Activated CD4-positive, alpha-beta T cell treated with anti-CD3 and anti-CD28 coated beads, Interleukin-2, amount 10 ng/mL, durations not matched to agents 24 days and 14 days (primary cell): ENCODE measurements at regions of chr5 and their contacts with region 1.

Region 1: GRCh38 chr5:168219515-168220410 is 71.7 kb upstream of the WWC1 start:
- DNase-seq: peak; percentile 86
- H3K4me3 Mint-ChIP-seq: no peak overlapping the region
- H3K27ac Mint-ChIP-seq: no peak overlapping the region
- H3K4me1 Mint-ChIP-seq: peaks cover 1% of the 10 kb centered on the region
- H3K27me3 Mint-ChIP-seq: peaks cover 16% of the 10 kb centered on the region

Region 2: DNA sequence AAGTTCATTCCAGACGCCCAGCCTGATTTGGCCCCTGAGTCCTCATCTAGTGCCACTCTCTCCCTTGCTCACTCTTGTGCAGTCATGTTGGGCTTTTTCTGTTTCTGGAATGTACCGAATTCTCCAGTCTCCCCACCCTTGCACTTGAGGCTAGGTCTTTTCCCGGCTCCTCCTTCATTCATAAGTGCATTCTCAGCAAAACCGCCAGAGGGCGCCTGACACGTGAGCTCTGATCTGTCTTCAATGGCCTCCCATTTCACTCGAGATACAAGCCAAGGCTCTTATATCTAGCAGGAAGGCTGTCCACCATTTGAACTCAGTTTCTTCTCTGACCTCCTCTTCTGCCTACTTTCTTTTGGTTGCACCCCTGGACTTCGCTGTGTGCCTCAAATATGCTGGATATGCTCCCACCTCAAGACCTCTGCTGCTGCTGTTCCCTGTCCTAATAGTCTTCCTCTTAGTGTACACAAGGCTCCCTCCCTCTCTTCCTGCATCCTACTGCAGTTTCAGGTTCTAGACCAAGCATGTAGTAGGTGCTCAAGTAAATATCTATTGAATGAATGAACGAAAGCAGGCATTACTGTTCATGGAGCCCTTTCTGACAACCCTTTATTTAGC is 496.4 kb before region 1 on chr5:
- intact Hi-C with region 1: loop called (anchors 1 kb)
- DNase-seq: peak; percentile 88
- H3K4me3 Mint-ChIP-seq: no peak overlapping the region
- H3K27ac Mint-ChIP-seq: no peak overlapping the region
- H3K4me1 Mint-ChIP-seq: peaks cover 3% of the 10 kb centered on the region
- H3K27me3 Mint-ChIP-seq: peaks cover 2% of the 10 kb centered on the region

Region 3: GRCh38 chr5:168114444-168115017 is 105.2 kb before region 1 on chr5:
- intact Hi-C with region 1: loop called (anchors 1 kb)
- DNase-seq: peak; percentile 80
- H3K4me3 Mint-ChIP-seq: no peak overlapping the region
- H3K27ac Mint-ChIP-seq: no peak overlapping the region
- H3K4me1 Mint-ChIP-seq: no peaks in the 10 kb centered on the region
- H3K27me3 Mint-ChIP-seq: peaks cover 5% of the 10 kb centered on the region

Region 4: DNA sequence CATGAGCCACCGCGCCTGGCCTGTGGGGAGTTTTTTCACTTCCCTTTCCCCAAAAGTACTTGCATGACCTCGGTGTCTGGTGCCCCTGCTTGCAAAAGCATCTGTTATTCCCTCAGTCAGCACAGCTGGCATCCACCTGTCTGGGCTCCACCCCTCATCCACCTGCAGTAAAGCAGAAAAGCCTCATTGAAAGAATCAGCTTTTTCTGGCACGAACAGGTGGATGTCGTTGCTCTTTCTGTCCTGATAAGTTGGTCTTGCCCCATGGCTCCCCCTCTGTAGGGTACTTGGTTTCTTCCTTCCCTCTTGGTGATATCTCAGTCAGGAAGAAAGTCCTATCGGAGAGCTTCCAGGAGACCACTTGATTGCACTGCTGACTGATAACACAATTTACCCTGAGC is 109.1 kb after region 1 on chr5:
- intact Hi-C with region 1: no loop called
- DNase-seq: no peak
- H3K4me3 Mint-ChIP-seq: no peak overlapping the region
- H3K27ac Mint-ChIP-seq: no peak overlapping the region
- H3K4me1 Mint-ChIP-seq: peaks cover 3% of the 10 kb centered on the region
- H3K27me3 Mint-ChIP-seq: peaks cover 6% of the 10 kb centered on the region